ENCODE measurements at regions of chr11 and their contacts with region 1.

Region 1: GRCh38 chr11:66677599-66678375 is at the start of gene RBM4B:
- DNase-seq: peak; percentile 98 to 99 (median 99)
- ATAC-seq: peak; percentile 99
- H3K4me3 ChIP-seq: peak within 1 kb of the TSS; percentile 59
- H3K27ac ChIP-seq: peak within 1 kb of the TSS; percentile 93
- H3K4me1 ChIP-seq: peaks cover 5% of the 10 kb centered on the region
- H3K27me3 ChIP-seq: no peaks in the 10 kb centered on the region
- total RNA-seq, gene RBM4B: 9.0 to 15.7 (median 12.2) TPM

Region 2: GRCh38 chr11:66408488-66409214 is 269.1 kb before region 1 on chr11:
- intact Hi-C with region 1: loop called in 1 of 4 experiments (anchors 5 kb)
- DNase-seq: peak; percentile 93 to 96 (median 95)
- ATAC-seq: peak; percentile 93 to 95
- H3K4me3 ChIP-seq: peak overlapping the region; percentile 34
- H3K27ac ChIP-seq: no peak overlapping the region
- H3K4me1 ChIP-seq: no peaks in the 10 kb centered on the region
- H3K27me3 ChIP-seq: no peaks in the 10 kb centered on the region

Region 3: DNA sequence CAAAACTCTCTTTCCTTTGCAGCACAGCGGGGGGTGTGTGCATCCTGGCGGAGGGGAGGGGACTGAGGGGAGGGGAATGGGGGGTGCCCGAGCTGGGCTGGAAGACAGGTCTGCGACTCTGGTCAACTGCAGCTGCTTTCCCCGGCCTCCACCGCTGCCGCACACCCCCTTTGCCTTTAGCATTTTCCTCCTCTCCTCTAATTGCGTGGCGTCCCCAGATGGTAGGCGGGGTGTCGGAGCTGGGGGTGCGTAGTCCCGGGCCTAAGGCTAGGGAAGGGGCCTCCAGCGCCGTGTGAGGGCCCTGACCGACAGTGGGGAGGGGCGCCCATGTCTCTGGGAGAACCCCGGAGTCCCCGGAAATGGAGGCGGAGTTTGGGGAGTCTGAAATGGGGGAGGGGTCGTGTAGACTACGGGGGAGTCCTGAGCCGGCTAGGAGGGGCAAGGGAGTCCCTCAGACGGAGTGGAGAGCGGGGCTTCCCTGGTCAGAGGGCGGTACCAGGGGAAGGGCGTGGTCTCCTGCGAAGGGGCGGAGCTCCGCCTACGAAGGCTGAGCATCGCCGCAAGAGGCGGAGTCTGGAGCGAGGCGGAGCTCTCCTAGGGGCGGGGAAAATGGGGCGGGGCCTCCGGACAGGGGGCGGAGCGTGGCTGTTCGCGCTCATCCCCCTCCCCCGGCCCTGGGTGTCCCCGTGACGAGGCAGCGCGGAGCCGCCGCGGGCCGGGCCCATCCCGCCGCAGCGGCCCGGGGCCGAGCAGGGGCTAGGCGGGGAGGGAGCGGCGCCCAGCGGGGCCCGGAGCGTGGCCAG is 211.4 kb before region 1 on chr11 and contains the start of gene PELI3:
- intact Hi-C with region 1: no loop called
- DNase-seq: peak; percentile 92 to 98 (median 97)
- ATAC-seq: peak; percentile 98
- H3K4me3 ChIP-seq: peak within 1 kb of the TSS; percentile 94
- H3K27ac ChIP-seq: peak within 1 kb of the TSS; percentile 6
- H3K4me1 ChIP-seq: peaks cover 6% of the 10 kb centered on the region
- H3K27me3 ChIP-seq: no peaks in the 10 kb centered on the region
- total RNA-seq, gene PELI3: 9.9 to 14.2 (median 12.8) TPM

Region 4: GRCh38 chr11:66579017-66579606 is 98.7 kb before region 1 on chr11:
- intact Hi-C with region 1: loop called (anchors 1 to 5 kb)
- DNase-seq: peak; percentile 87 to 94 (median 92)
- ATAC-seq: peak; percentile 92 to 96
- H3K4me3 ChIP-seq: no peak overlapping the region
- H3K27ac ChIP-seq: no peak overlapping the region
- H3K4me1 ChIP-seq: no peaks in the 10 kb centered on the region
- H3K27me3 ChIP-seq: no peaks in the 10 kb centered on the region

Region 5: DNA sequence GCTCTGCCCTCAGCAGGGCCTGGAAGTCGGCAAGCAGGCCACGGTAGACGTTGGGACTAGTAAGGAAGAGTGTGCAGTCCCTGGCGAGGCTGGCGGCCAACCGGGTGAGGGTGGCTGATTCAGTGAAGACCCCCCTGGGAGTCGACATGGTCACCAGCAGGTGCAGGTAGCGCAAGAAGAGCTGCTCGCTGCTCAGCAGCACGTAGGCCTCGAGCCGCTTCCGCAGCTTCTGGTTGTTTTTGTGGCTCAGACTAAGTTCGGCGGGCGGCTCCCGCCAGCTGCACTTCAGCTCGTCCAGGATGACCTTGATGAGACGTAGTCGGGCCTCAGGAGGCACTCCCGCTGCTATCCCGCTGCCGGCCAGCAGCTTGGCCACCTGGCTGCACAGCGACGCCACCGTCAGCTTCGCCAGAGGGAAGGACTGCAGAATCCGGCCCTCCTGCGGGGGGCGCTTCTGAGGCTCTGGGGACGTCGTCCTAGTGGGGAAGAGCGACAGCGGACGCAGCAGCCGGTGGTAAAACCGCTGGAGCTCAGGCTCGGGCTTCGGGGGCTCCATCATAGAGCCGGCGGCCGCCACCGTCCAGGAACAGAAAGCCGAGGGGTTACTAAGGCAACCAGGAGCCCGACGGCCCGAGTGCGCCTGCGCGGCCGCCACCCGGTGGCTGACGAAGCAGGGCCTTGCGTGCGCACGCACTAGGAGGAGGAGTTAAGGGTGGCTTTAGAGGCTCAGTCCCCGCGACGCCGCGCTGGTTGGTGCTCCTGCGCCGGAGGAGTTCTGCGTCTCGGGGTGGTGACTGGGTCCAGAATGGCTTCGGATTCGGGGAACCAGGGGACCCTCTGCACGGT is 85.1 kb before region 1 on chr11 and contains the starts of genes CCDC87 and CCS:
- intact Hi-C with region 1: loop called in 2 of 4 experiments (anchors 5 kb)
- DNase-seq: peak; percentile 99 to 100 (median 99)
- ATAC-seq: peak; percentile 97 to 98
- H3K4me3 ChIP-seq: peak within 1 kb of the TSS; percentile 48
- H3K27ac ChIP-seq: peak within 1 kb of the TSS; percentile 37
- H3K4me1 ChIP-seq: peaks cover 9% of the 10 kb centered on the region
- H3K27me3 ChIP-seq: no peaks in the 10 kb centered on the region
- total RNA-seq, gene CCDC87: 0.53 to 0.99 (median 0.68) TPM
- total RNA-seq, gene CCS: 30.3 to 40.2 (median 34.2) TPM

Region 6: DNA sequence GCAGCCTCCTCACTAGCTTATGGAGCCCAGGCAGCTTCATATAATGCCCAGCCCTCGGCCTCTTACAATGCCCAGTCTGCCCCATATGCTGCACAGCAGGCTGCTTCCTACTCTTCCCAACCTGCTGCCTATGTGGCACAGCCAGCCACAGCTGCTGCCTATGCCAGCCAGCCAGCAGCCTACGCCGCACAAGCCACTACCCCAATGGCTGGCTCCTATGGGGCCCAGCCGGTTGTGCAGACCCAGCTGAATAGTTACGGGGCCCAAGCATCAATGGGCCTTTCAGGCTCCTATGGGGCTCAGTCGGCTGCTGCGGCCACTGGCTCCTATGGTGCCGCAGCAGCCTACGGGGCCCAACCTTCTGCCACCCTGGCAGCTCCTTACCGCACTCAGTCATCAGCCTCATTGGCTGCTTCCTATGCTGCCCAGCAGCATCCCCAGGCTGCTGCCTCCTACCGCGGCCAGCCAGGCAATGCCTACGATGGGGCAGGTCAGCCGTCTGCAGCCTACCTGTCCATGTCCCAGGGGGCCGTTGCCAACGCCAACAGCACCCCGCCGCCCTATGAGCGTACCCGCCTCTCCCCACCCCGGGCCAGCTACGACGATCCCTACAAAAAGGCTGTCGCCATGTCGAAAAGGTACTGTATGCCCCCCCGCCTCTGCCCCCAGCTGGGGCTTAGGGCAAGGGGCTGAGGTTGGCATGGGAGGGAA is 52.6 kb before region 1 on chr11:
- intact Hi-C with region 1: loop called in 1 of 4 experiments (anchors 10 kb)
- DNase-seq: peak in 1 of 3 donors; percentile 49
- ATAC-seq: peak; percentile 6 to 8
- H3K4me3 ChIP-seq: no peak overlapping the region
- H3K27ac ChIP-seq: no peak overlapping the region
- H3K4me1 ChIP-seq: peaks cover 21% of the 10 kb centered on the region
- H3K27me3 ChIP-seq: no peaks in the 10 kb centered on the region

Region 7: GRCh38 chr11:66694732-66695207 is 17.0 kb after region 1 on chr11:
- intact Hi-C with region 1: no loop called
- DNase-seq: peak; percentile 86 to 93 (median 92)
- ATAC-seq: peak; percentile 84 to 86
- H3K4me3 ChIP-seq: no peak overlapping the region
- H3K27ac ChIP-seq: no peak overlapping the region
- H3K4me1 ChIP-seq: no peaks in the 10 kb centered on the region
- H3K27me3 ChIP-seq: no peaks in the 10 kb centered on the region

Region 8: DNA sequence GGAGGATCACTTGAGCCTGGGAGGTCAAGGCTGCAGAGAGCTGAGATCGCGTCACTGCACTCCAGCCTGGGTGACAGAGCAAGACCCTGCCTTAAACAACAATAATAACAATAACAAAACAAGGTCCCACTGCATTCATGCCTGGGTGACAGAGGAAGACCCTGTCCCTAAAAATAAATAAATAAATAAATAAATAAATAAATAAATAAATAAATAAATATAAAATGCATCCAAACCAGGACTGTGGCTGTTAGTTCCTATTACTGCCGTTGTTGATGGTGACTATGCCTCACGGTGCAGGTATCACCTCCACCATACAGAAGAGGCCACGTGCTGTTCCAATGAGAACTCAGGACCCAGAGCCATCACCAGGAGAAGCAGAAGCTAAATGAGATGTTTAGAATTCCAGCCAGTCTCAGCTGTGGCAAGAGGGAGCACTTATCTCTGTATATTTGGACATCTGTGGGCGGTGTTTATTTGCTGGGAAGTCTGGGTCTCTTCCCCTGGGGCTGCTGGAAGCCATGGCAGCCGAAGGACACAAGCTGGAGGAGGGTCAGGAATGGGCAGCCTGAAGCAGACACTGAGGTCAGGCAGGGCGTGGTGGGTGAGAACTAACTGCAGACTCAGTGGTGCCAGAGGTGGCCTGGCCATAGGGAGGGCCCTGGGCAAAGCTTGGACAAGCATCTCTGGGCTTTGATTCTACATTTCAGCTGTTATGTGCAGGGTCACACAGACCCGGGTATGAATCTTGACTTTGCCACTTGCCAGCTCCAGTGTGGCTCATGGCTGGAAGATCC is 319.0 kb after region 1 on chr11:
- intact Hi-C with region 1: no loop called
- DNase-seq: peak; percentile 76 to 87 (median 83)
- ATAC-seq: peak; percentile 91 to 94
- H3K4me3 ChIP-seq: no peak overlapping the region
- H3K27ac ChIP-seq: no peak overlapping the region
- H3K4me1 ChIP-seq: peaks cover 5% of the 10 kb centered on the region
- H3K27me3 ChIP-seq: no peaks in the 10 kb centered on the region